Activated CD4-positive, alpha-beta memory T cell treated with anti-CD3 and anti-CD28 coated beads for 36 hours (primary cell): ENCODE measurements at regions of chr5 and their contacts with region 1.

Region 1: GRCh38 chr5:109688971-109689739 is 572 bp upstream of the MAN2A1 start:
- DNase-seq: peak; percentile 85
- H3K4me3 Mint-ChIP-seq: peak overlapping the region; percentile 87
- H3K27ac Mint-ChIP-seq: peak overlapping the region; percentile 89
- H3K4me1 Mint-ChIP-seq: peaks cover 40% of the 10 kb centered on the region
- H3K27me3 Mint-ChIP-seq: no peaks in the 10 kb centered on the region

Region 2: GRCh38 chr5:108748401-108749127 is 940.6 kb before region 1 on chr5:
- CTCF ChIA-PET with region 1: no interaction called
- POLR2A ChIA-PET with region 1: interaction called, 3 read pairs
- intact Hi-C with region 1: loop called (anchors 1 kb)
- DNase-seq: peak; percentile 98
- H3K4me3 Mint-ChIP-seq: peak overlapping the region; percentile 94
- H3K27ac Mint-ChIP-seq: peak overlapping the region; percentile 88
- H3K4me1 Mint-ChIP-seq: peaks cover 9% of the 10 kb centered on the region
- H3K27me3 Mint-ChIP-seq: peaks cover 3% of the 10 kb centered on the region

Region 3: DNA sequence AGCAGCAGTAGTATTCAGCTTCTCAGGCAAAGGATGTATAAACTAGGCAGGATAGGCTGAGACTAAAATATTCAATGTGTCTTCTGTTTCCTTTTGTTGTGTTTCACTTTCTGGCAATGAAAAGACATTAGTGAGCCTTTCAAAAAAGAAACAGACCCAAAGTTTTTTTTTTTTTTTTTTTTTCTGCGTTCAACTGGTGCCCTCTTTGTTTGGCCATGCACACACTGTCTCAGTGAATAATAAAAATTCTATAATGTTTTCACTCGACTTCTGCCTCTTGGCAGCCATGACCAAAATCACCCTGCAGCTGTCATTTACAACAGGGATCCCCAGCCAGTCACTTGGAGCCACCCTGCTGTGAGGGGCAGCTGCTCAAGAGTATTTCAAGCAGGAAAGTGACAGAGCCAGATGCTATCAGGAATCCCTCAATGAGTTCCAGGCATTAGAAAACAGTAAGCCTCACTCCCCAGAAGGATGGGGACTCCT is 43.4 kb before region 1 on chr5:
- CTCF ChIA-PET with region 1: no interaction called
- POLR2A ChIA-PET with region 1: no interaction called
- intact Hi-C with region 1: no loop called
- DNase-seq: no peak
- H3K4me3 Mint-ChIP-seq: no peak overlapping the region
- H3K27ac Mint-ChIP-seq: no peak overlapping the region
- H3K4me1 Mint-ChIP-seq: no peaks in the 10 kb centered on the region
- H3K27me3 Mint-ChIP-seq: no peaks in the 10 kb centered on the region

Region 4: GRCh38 chr5:109857405-109858031 is 168.4 kb after region 1 on chr5:
- CTCF ChIA-PET with region 1: interaction called, 3 read pairs
- POLR2A ChIA-PET with region 1: no interaction called
- intact Hi-C with region 1: loop called (anchors 2 kb)
- DNase-seq: peak; percentile 27
- H3K4me3 Mint-ChIP-seq: no peak overlapping the region
- H3K27ac Mint-ChIP-seq: peak overlapping the region; percentile 79
- H3K4me1 Mint-ChIP-seq: peaks cover 55% of the 10 kb centered on the region
- H3K27me3 Mint-ChIP-seq: no peaks in the 10 kb centered on the region

Region 5: GRCh38 chr5:110054240-110054639 is 365.1 kb after region 1 on chr5:
- CTCF ChIA-PET with region 1: interaction called, 4 read pairs
- POLR2A ChIA-PET with region 1: no interaction called
- intact Hi-C with region 1: loop called (anchors 1 kb)
- DNase-seq: peak; percentile 79
- H3K4me3 Mint-ChIP-seq: no peak overlapping the region
- H3K27ac Mint-ChIP-seq: peak overlapping the region; percentile 67
- H3K4me1 Mint-ChIP-seq: peaks cover 30% of the 10 kb centered on the region
- H3K27me3 Mint-ChIP-seq: no peaks in the 10 kb centered on the region

Region 6: DNA sequence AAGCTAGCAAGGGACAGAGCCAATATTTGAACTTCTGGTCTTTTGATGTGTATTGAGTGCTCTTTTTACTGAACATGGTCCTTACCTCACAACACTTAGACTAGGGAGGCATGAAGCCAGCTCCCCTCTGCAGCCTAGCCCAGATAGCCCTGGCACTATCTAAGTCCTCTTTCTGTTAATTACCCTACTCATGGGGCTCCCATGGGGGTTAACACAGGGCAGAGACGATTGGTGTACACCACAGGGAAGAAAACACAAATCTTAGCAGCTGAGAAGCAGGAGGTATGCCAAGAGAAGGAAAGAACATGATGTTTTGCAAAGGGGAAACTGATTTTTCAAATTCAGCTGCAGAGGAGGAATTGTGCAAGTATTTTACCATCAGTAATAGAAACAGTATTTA is 653.5 kb after region 1 on chr5:
- CTCF ChIA-PET with region 1: no interaction called
- POLR2A ChIA-PET with region 1: no interaction called
- intact Hi-C with region 1: loop called (anchors 5 kb)
- DNase-seq: no peak
- H3K4me3 Mint-ChIP-seq: no peak overlapping the region
- H3K27ac Mint-ChIP-seq: no peak overlapping the region
- H3K4me1 Mint-ChIP-seq: no peaks in the 10 kb centered on the region
- H3K27me3 Mint-ChIP-seq: no peaks in the 10 kb centered on the region

Region 7: GRCh38 chr5:110738812-110739651 is 1049.9 kb after region 1 on chr5 and contains the start of gene SLC25A46:
- CTCF ChIA-PET with region 1: no interaction called
- POLR2A ChIA-PET with region 1: no interaction called
- intact Hi-C with region 1: loop called (anchors 5 kb)
- DNase-seq: peak; percentile 93
- H3K4me3 Mint-ChIP-seq: peak within 1 kb of the TSS; percentile 91
- H3K27ac Mint-ChIP-seq: peak within 1 kb of the TSS; percentile 84
- H3K4me1 Mint-ChIP-seq: peaks cover 34% of the 10 kb centered on the region
- H3K27me3 Mint-ChIP-seq: peaks cover 5% of the 10 kb centered on the region
- total RNA-seq, gene SLC25A46: 35.4 to 37.6 TPM